Activated CD8-positive, alpha-beta T cell treated with anti-CD3 and anti-CD28 coated beads, Interleukin-2, amount 10 ng/mL, durations not matched to agents 7 days and 5 days (primary cell): ENCODE measurements at regions of chr12 and their contacts with region 1.

Region 1: GRCh38 chr12:53079226-53080117 is at the start of gene SPRYD3:
- DNase-seq: peak; percentile 97
- ATAC-seq: peak; percentile 99
- H3K4me3 Mint-ChIP-seq: peak within 1 kb of the TSS; percentile 89
- H3K27ac Mint-ChIP-seq: peak within 1 kb of the TSS; percentile 93
- H3K4me1 Mint-ChIP-seq: peaks cover 28% of the 10 kb centered on the region
- H3K27me3 Mint-ChIP-seq: no peaks in the 10 kb centered on the region
- total RNA-seq, gene SPRYD3: 27.2 to 31.2 TPM

Region 2: DNA sequence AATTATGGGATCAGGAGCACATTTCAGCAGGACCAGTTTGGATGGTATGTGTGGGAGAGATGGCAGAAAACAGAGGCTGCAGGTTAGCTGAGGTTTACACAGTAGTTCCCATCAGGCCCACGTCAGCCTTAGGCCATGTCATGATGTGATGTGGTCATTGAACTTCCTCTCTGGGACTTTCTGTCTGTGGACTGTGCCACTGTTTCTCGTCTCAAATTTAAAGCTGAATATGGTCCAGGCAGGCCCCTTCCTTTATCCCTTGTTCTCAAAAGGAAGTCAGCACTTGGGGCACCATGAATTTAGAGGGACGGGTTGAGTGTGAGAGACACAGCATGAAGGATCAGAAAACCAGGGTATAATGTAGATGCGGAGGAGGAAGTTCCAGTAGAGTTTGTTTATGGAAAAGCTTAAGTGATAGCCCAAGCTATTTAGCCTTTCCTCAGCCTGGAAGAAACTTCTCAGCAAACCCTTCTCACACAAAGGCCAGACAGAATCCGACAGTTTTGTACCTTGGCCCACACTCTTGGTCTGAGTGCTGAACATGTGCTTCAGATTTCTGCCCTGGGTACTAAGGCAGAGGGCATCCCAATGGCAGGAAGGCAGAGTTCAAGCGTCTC is 14.4 kb after region 1 on chr12:
- CTCF ChIA-PET with region 1: interaction called, 170 read pairs
- POLR2A ChIA-PET with region 1: interaction called, 12 read pairs
- DNase-seq: no peak
- ATAC-seq: no peak
- H3K4me3 Mint-ChIP-seq: no peak overlapping the region
- H3K27ac Mint-ChIP-seq: no peak overlapping the region
- H3K4me1 Mint-ChIP-seq: peaks cover 31% of the 10 kb centered on the region
- H3K27me3 Mint-ChIP-seq: peaks cover 24% of the 10 kb centered on the region